ENCODE measurements at regions of chr20 and their contacts with region 1.

Region 1: DNA sequence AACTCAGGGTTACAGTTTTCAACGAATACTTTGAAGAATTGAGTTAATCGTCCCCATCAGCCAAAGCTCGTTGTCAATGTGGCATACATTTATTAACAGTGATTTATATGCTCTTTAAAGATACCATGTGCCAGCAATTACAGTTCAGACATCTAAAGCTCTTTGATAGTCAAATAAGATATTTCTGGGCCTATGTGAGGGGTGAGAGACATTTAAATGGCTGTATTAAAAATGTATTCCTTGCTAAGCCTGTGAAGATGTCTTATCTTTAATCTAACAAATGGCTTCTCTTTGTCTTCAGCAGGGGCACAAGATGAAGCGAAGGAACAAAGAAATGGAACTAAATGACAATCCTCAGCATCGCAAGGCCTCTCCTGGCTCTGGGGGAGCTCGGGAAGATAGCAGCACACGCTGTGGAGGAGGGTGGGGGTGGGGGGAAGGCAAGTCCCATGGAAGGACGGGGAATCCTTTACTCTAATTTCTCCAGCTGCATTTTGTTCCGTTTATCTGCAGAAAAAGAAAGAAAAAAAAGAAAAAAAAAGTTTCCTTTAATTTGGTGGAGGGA is 523.6 kb downstream of the KIF16B start:
- DNase-seq: no peak
- H3K4me3 ChIP-seq: no peak overlapping the region
- H3K27ac ChIP-seq: no peak overlapping the region
- H3K4me1 ChIP-seq: peaks cover 37% of the 10 kb centered on the region
- CTCF ChIP-seq: no peak

Region 2: GRCh38 chr20:15742087-15742486 is 307.5 kb before region 1 on chr20:
- CTCF ChIA-PET with region 1: no interaction called
- POLR2A ChIA-PET with region 1: no interaction called
- intact Hi-C with region 1: no loop called
- DNase-seq: no peak
- H3K4me3 ChIP-seq: no peak overlapping the region
- H3K27ac ChIP-seq: no peak overlapping the region
- H3K4me1 ChIP-seq: no peaks in the 10 kb centered on the region
- CTCF ChIP-seq: no peak

Region 3: DNA sequence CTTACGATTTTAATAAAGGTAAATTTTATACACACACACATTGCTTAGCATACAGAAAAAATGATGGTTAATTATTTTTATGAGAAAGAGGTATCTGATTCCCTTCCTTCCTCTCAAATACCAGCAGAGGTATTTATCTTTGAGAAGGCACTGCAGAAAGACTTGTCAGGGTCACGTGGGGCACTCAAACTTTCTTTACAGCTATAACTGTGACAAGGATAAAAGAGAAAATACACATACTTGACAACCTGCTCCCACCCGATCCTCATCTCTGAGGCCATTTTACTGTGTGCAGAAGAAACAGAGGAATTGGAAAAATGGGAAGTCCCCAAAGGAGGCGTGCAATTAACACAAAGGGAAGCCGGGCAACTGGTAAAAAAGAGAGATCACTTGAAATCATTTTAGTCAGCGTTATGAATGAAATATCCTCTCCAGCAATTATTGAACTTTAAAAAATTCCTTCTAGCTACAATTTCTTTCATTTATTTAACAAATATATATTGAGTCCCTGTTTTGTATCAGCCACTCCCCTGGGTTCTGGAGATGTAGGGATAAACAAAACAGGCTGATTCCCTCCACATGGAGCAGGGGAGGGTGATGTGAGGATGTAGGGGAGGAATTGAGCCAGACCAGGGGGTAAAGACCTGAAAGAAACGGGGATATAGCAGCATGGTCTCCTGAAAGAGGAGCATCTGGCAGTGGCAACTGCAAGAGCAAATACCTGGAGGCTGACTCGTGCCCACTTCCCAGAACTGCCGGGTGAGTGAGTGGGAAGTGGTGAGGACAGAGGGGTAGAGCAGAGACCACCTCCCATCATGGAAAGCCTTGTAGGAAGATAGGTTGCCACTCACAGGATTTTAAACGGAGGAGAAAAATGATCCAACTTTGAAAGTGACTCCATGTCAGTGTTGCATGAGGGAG is 13.3 kb after region 1 on chr20:
- CTCF ChIA-PET with region 1: interaction called, 4 read pairs
- POLR2A ChIA-PET with region 1: interaction called, 17 read pairs
- intact Hi-C with region 1: no loop called
- DNase-seq: no peak
- H3K4me3 ChIP-seq: no peak overlapping the region
- H3K27ac ChIP-seq: no peak overlapping the region
- H3K4me1 ChIP-seq: peaks cover 30% of the 10 kb centered on the region
- CTCF ChIP-seq: no peak

Measured in OCI-LY7 (cell line).